HepG2 (cell line): ENCODE measurements at regions of chr12 and their contacts with region 1.

Region 1: GRCh38 chr12:6944381-6945186 is 762 bp downstream of the C12orf57 start:
- DNase-seq: peak; percentile 90
- ATAC-seq: peak; percentile 58
- H3K4me3 ChIP-seq: peak overlapping the region; percentile 54 to 79 (median 73)
- H3K27ac ChIP-seq: peak overlapping the region; percentile 98
- H3K4me1 ChIP-seq: peaks cover 38% of the 10 kb centered on the region
- H3K27me3 ChIP-seq: no peaks in the 10 kb centered on the region
- CTCF ChIP-seq: peak; percentile 96
- EP300 ChIP-seq: no peak
- POLR2A ChIP-seq: no peak
- RAD21 ChIP-seq: peak; percentile 81

Region 2: GRCh38 chr12:6607751-6608591 is 336.6 kb before region 1 on chr12:
- CTCF ChIA-PET with region 1: no interaction called
- POLR2A ChIA-PET with region 1: no interaction called
- in situ Hi-C with region 1: no loop called
- intact Hi-C with region 1: no loop called
- DNase-seq: peak; percentile 56
- ATAC-seq: peak; percentile 17
- H3K4me3 ChIP-seq: no peak overlapping the region
- H3K27ac ChIP-seq: no peak overlapping the region
- H3K4me1 ChIP-seq: peaks cover 58% of the 10 kb centered on the region
- H3K27me3 ChIP-seq: no peaks in the 10 kb centered on the region; a peak in 1 of 5 replicates
- CTCF ChIP-seq: no peak
- EP300 ChIP-seq: no peak
- POLR2A ChIP-seq: no peak
- RAD21 ChIP-seq: no peak

Region 3: DNA sequence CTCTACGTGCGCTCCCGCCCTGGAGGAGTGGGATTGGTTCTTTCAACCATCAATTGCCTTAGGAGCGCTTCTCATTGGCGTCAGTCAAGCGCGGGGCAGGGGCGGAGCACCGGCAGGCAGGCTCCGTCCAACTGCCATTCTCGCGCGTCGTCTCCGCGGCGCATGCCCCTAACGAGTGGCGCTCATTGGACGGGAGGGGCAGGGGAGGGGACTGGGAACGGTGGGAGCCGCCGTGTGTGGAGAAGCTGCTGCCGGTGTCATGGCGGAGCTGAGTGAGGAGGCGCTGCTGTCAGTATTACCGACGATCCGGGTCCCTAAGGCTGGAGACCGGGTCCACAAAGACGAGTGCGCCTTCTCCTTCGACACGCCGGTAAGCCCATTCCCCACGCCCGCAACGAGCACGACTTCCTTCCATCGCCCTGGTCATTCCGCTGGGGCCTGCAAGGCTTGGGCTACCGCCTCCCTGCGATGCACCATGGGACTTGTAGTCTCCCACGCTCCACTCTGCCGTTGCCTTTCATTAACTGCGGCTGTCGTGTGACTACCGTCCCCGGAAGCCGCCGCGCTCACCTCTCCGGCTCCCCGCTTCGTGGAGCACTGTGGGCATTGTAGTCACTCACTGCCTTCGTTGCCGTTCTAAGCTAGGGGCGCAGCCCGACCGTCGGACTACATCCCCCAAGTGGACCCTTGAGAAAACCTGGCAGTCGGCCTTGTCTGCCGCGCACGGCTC is 92.5 kb before region 1 on chr12 and contains the start of gene USP5:
- CTCF ChIA-PET with region 1: no interaction called
- POLR2A ChIA-PET with region 1: interaction called, 35 read pairs
- in situ Hi-C with region 1: no loop called
- intact Hi-C with region 1: no loop called
- DNase-seq: peak; percentile 98
- ATAC-seq: peak; percentile 86
- H3K4me3 ChIP-seq: peak within 1 kb of the TSS; percentile 79 to 95 (median 85)
- H3K27ac ChIP-seq: peak within 1 kb of the TSS; percentile 82
- H3K4me1 ChIP-seq: peaks cover 33% of the 10 kb centered on the region
- H3K27me3 ChIP-seq: no peaks in the 10 kb centered on the region
- CTCF ChIP-seq: 0 out of 2 replicates have a peak, but pooled peaks have one; percentile 7
- EP300 ChIP-seq: no peak
- POLR2A ChIP-seq: peak; percentile 70 to 90
- RAD21 ChIP-seq: peak; percentile 65
- total RNA-seq, gene USP5: 53.4 and 56.0 TPM in 2 replicates

Region 4: DNA sequence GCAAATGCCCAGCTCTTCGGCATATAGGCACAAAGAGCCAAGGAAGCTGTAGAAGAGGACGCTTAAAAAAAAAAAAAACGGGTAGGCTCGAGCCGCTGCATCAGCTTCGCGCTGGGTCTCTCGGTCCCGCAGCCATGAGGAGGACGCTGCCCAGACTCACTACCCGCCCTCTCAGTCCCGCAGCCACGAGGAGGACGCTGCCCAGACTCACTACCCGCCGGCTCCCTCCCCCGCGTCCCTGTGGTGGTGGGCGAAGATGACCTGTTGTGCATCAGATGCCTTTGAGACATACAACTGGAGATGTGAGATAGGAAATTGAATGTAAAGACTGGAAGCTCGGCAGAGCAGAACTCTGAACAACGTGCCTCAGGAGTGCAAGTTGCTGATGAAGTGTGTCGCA is 60.0 kb before region 1 on chr12:
- CTCF ChIA-PET with region 1: no interaction called
- POLR2A ChIA-PET with region 1: interaction called, 13 read pairs
- in situ Hi-C with region 1: no loop called
- intact Hi-C with region 1: no loop called
- DNase-seq: no peak
- ATAC-seq: no peak
- H3K4me3 ChIP-seq: no peak overlapping the region
- H3K27ac ChIP-seq: no peak overlapping the region
- H3K4me1 ChIP-seq: peaks cover 61% of the 10 kb centered on the region
- H3K27me3 ChIP-seq: no peaks in the 10 kb centered on the region
- CTCF ChIP-seq: no peak
- EP300 ChIP-seq: no peak
- POLR2A ChIP-seq: no peak
- RAD21 ChIP-seq: no peak

Region 5: GRCh38 chr12:6927379-6928024 is 17.1 kb before region 1 on chr12 and contains the start of gene ATN1:
- CTCF ChIA-PET with region 1: interaction called, 7 read pairs
- POLR2A ChIA-PET with region 1: interaction called, 55 read pairs
- in situ Hi-C with region 1: no loop called
- intact Hi-C with region 1: loop called (anchors 2 kb)
- DNase-seq: no peak
- ATAC-seq: peak; percentile 18
- H3K4me3 ChIP-seq: peak within 1 kb of the TSS; percentile 82 to 93 (median 90)
- H3K27ac ChIP-seq: peak within 1 kb of the TSS; percentile 64
- H3K4me1 ChIP-seq: peaks cover 66% of the 10 kb centered on the region
- H3K27me3 ChIP-seq: no peaks in the 10 kb centered on the region; a peak in 1 of 5 replicates
- CTCF ChIP-seq: no peak
- EP300 ChIP-seq: no peak
- POLR2A ChIP-seq: peak in 1 of 2 experiments; percentile 53; a peak in 1 of 4 replicates
- RAD21 ChIP-seq: no peak
- total RNA-seq, gene ATN1: 2.1 TPM in 2 replicates

Region 6: GRCh38 chr12:7018350-7019042 is 73.9 kb after region 1 on chr12 and contains the start of gene LPCAT3:
- CTCF ChIA-PET with region 1: interaction called, 3 read pairs
- POLR2A ChIA-PET with region 1: interaction called, 45 read pairs
- in situ Hi-C with region 1: no loop called
- intact Hi-C with region 1: no loop called
- DNase-seq: peak; percentile 92
- ATAC-seq: peak; percentile 96
- H3K4me3 ChIP-seq: peak within 1 kb of the TSS; percentile 60 to 97 (median 85)
- H3K27ac ChIP-seq: peak within 1 kb of the TSS; percentile 97
- H3K4me1 ChIP-seq: peaks cover 35% of the 10 kb centered on the region
- H3K27me3 ChIP-seq: no peaks in the 10 kb centered on the region; a peak in 1 of 5 replicates
- CTCF ChIP-seq: peak; percentile 87
- EP300 ChIP-seq: peak in 1 of 2 experiments; percentile 34; a peak in 1 of 4 replicates
- POLR2A ChIP-seq: peak; percentile 71 to 78
- RAD21 ChIP-seq: peak; percentile 92
- total RNA-seq, gene LPCAT3: 22.1 and 44.5 TPM in 2 replicates

Region 7: DNA sequence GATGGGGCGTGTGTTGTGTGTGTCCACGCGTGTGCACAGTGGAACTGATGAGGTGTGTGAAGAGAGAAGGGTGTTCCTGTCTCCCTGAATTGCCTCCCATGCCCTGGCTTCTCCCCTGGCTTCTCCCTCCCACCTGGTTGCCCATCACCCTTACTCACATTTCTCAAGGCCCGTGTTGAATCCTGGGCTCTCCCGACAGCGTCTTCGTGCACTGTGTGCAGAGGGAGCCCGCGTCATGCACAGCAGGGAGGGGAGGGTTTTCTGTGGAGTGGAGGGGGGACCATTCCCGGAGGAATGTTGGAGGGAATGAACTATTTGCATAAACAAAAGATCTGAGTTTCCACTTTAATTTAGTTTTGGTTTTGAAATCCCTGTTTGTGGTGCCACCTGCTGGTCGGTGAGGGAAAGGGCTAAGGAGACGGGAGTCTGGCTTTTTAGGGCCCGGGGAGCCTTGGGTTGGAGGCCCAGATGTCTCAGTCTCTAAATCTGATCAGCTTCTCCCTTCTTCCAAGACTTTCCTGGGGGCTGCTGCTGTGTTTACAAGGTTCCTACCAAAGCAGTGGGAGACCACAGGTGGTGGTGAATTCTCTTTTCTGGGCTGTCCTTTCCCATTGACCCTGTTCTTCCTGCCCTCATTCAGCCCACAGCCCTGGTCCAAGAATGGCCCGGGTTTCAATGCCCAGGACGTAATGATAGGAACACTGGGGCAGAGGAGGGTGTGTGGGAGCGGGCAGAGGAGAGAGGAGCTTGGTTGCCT is 147.8 kb after region 1 on chr12 and contains the start of gene C1R:
- CTCF ChIA-PET with region 1: interaction called, 3 read pairs
- POLR2A ChIA-PET with region 1: interaction called, 9 read pairs
- in situ Hi-C with region 1: no loop called
- intact Hi-C with region 1: loop called (anchors 1 kb)
- DNase-seq: peak; percentile 48
- ATAC-seq: peak; percentile 52
- H3K4me3 ChIP-seq: peak within 1 kb of the TSS; percentile 53 to 68 (median 53); a peak in 5 of 6 replicates
- H3K27ac ChIP-seq: no peak within 1 kb of the TSS
- H3K4me1 ChIP-seq: peaks cover 27% of the 10 kb centered on the region
- H3K27me3 ChIP-seq: peaks cover 0 to 2% of the 10 kb centered on the region in 2 experiments; a peak in 1 of 5 replicates
- CTCF ChIP-seq: peak; percentile 86
- EP300 ChIP-seq: no peak
- POLR2A ChIP-seq: no peak; a peak in 1 of 4 replicates
- RAD21 ChIP-seq: peak; percentile 68
- total RNA-seq, gene C1R: 1.7 and 3.5 TPM in 2 replicates

Region 8: DNA sequence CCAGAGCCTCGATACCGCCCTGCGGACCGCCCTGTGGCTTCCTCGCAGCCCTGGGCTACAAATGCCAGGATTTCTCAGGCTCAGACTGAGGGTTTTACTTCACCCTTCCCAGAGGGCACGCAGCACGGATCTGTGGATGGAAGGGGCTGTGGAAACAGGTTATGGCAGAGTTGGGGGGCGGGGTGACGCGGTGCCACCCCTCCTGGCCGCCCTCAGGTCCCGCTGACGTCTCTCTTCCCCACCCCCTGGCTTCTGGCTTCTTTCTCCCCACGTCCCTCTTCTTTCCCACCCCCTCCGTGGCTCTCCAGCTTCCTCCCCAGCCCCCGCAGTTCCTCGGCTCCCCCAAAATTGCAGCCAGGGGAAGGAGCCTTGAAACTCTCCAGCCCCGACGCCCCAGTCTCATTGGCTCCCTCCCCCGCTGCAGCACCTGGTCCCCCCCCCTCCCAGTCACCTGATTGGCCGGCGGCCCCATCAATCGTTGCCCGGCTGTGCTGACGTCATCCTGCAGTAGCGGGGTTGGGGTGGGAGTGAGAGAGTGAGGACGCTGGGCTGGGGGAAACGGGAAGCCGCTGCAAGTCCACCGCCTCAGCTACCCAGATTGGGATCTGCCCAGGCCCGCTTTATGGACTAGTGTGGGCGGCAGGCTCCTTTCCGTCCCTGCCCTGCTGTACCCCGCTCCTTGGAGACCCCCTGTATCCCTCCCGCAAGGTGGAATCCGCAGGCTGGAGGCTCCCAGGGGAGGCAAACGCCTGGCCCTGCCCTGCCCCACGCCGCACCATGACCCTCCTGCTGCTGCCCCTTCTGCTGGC is 185.5 kb after region 1 on chr12 and contains the start of gene CLSTN3:
- CTCF ChIA-PET with region 1: no interaction called
- POLR2A ChIA-PET with region 1: interaction called, 11 read pairs
- in situ Hi-C with region 1: no loop called
- intact Hi-C with region 1: no loop called
- DNase-seq: peak; percentile 69
- ATAC-seq: peak; percentile 69
- H3K4me3 ChIP-seq: peak within 1 kb of the TSS; percentile 76 to 92 (median 88)
- H3K27ac ChIP-seq: peak within 1 kb of the TSS; percentile 92
- H3K4me1 ChIP-seq: peaks cover 61% of the 10 kb centered on the region
- H3K27me3 ChIP-seq: no peaks in the 10 kb centered on the region; a peak in 1 of 5 replicates
- CTCF ChIP-seq: no peak
- EP300 ChIP-seq: no peak
- POLR2A ChIP-seq: peak; percentile 33 to 83; a peak in 3 of 4 replicates
- RAD21 ChIP-seq: no peak; the same call in 1 of the 2 replicates
- total RNA-seq, gene CLSTN3: 10.8 and 26.2 TPM in 2 replicates

Region 9: DNA sequence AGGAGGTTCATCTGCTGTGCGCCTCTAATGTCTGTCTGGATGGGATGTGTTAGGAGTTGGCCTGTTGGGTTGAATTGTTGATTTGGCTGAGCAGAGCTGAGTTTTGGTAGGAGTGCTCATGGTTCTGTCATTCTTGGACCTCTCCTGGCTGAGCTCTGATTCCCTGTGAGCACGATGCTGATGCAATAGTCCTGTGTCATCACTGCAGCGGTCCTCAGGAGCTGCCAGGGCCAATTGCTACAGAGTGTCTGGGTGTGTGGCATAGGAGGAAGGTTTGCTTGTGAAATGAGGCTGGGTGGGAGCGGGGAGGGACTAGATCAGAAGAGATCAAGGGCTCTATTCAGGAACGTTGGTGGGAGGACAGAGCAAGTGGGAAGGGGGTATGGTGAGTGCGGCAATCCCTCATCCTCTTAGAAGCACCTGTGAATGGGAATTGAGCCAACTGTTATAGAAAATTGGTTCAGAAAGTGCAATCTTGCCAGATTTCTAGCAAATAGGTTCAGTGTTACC is 266.1 kb after region 1 on chr12:
- CTCF ChIA-PET with region 1: no interaction called
- POLR2A ChIA-PET with region 1: no interaction called
- in situ Hi-C with region 1: no loop called
- intact Hi-C with region 1: no loop called
- DNase-seq: no peak
- ATAC-seq: no peak
- H3K4me3 ChIP-seq: no peak overlapping the region
- H3K27ac ChIP-seq: no peak overlapping the region
- H3K4me1 ChIP-seq: no peaks in the 10 kb centered on the region
- H3K27me3 ChIP-seq: no peaks in the 10 kb centered on the region
- CTCF ChIP-seq: no peak
- EP300 ChIP-seq: no peak
- POLR2A ChIP-seq: no peak
- RAD21 ChIP-seq: no peak